Activated T-helper 1 cell treated with anti-CD3 and anti-CD28 coated beads, Interleukin-12 subunit alpha, Interleukin-12 subunit beta, Interleukin-2, Interleukin-4 antibody, amounts not matched to agents 30 ng/mL and 10 ng/mL and 1 ng/mL, durations not matched to agents 14 hours and 24 hours and 36 hours (primary cell): ENCODE measurements at regions of chr14 and their contacts with region 1.

Region 1: GRCh38 chr14:23301288-23301968 is 1.2 kb downstream of the PPP1R3E start:
- DNase-seq: peak; percentile 99
- H3K4me3 Mint-ChIP-seq: peak overlapping the region; percentile 91
- H3K27ac Mint-ChIP-seq: peak overlapping the region; percentile 97
- H3K4me1 Mint-ChIP-seq: peaks cover 29% of the 10 kb centered on the region
- H3K27me3 Mint-ChIP-seq: no peaks in the 10 kb centered on the region

Region 2: DNA sequence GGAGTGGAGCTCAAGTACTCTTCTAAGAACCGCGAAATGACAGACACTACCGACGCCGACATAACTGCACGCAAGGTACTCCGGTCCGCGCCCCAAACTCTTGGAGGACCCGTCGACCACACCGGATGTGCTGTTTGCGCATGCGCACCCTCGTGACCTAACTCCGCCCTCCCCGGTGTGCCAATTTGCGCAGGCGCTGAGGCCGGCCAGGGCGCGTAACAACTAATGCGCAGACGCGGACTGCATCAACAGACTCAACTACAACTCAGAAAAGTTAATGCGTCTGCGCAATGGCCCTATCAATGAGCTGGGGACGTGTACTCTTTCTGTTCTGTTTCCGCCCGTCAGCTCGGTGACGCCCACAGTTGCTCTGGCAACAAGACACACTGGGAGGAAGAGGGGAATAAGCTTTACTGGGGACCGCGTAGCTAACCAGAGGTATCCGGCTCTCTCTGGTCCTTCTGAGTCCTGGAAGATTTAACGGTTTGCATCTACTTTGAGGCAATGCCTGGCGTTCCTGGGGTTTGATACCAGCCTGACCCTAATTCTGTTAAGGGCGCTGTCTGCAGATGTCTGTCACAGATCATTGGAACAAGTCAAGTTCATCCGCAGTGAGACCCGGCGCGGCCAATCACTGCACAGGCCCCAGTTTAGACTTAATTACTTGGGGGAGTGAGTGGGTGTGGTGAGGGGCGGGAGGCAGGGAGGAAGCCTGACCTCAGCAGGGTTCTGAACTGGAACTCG is 712.2 kb before region 1 on chr14 and contains the start of gene DAD1:
- intact Hi-C with region 1: loop called (anchors 5 kb)
- DNase-seq: peak; percentile 100
- H3K4me3 Mint-ChIP-seq: peak within 1 kb of the TSS; percentile 91
- H3K27ac Mint-ChIP-seq: peak within 1 kb of the TSS; percentile 96
- H3K4me1 Mint-ChIP-seq: peaks cover 55% of the 10 kb centered on the region
- H3K27me3 Mint-ChIP-seq: no peaks in the 10 kb centered on the region
- total RNA-seq, gene DAD1: 228 and 229 TPM in 2 replicates

Region 3: DNA sequence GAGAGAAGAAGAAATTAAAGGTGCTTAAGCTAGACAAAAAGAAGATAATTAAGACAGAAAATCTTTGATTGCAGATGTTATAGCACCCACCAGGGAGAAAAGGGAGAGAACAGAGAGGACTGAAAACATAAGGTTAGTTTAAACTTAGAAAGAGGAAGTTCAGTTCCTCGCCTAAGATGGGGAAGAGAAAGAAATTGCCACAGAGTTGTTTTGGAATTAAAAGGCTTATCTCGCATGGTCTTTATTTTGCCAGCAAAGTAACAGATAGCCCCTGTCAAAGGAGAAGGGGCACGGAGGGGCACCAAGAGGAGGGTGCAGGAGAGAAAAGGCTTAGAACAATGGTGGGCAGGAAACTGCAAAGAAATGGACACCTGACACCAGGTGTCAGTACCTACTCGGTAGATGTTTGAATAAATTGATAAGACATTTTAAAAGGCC is 552.8 kb before region 1 on chr14:
- intact Hi-C with region 1: no loop called
- DNase-seq: no peak
- H3K4me3 Mint-ChIP-seq: no peak overlapping the region
- H3K27ac Mint-ChIP-seq: no peak overlapping the region
- H3K4me1 Mint-ChIP-seq: peaks cover 17% of the 10 kb centered on the region
- H3K27me3 Mint-ChIP-seq: peaks cover 3% of the 10 kb centered on the region

Region 4: DNA sequence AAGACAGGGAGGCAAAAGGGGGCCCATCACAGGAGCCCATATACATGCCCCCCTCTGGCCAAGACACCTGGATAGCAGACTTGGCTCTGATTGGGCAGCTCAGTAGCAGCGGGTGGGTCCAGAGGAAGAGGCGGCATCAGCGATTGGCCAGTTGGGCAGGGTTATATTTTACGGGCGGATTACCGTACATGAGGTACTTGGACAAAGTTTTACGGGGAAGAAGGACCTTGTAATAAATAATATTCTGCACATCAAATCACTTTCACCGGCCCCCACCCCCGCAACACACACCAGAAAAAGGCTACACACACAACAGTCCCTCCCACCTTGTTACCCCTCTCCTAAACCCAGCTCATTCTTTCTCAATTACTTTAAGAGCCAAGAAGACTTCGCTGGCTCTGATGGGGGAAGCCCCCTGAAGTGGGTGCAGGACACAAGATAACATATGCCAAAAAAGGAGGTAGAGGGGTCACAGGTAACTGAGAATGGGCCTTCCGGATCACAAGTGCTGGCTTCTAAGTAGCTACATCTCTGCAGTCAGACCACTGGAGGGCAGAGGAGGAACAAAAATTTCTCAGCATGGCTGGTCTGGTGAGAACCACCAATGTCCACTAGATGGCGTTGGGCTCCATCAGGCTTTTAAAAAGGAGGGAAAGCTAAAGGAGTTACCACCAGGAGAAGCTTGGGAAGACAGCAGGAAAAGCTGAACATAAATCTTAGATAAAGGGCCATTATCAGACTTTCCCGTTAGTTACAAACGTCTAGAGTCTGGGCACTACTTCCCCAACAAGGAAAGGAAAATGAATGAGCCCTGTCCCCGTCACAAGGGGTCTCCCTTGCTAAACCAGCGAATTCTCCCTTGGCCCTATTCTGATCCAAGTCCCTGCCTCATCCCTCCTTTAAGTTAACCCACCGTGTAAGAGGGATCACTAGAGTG is 232.7 kb before region 1 on chr14:
- intact Hi-C with region 1: loop called (anchors 1 kb)
- DNase-seq: peak; percentile 65
- H3K4me3 Mint-ChIP-seq: peak overlapping the region; percentile 74
- H3K27ac Mint-ChIP-seq: peak overlapping the region; percentile 53
- H3K4me1 Mint-ChIP-seq: peaks cover 42% of the 10 kb centered on the region
- H3K27me3 Mint-ChIP-seq: no peaks in the 10 kb centered on the region

Region 5: GRCh38 chr14:23269193-23269592 is 32.2 kb before region 1 on chr14:
- intact Hi-C with region 1: loop called (anchors 1 kb)
- DNase-seq: no peak
- H3K4me3 Mint-ChIP-seq: no peak overlapping the region
- H3K27ac Mint-ChIP-seq: no peak overlapping the region
- H3K4me1 Mint-ChIP-seq: no peaks in the 10 kb centered on the region
- H3K27me3 Mint-ChIP-seq: peaks cover 25% of the 10 kb centered on the region

Region 6: DNA sequence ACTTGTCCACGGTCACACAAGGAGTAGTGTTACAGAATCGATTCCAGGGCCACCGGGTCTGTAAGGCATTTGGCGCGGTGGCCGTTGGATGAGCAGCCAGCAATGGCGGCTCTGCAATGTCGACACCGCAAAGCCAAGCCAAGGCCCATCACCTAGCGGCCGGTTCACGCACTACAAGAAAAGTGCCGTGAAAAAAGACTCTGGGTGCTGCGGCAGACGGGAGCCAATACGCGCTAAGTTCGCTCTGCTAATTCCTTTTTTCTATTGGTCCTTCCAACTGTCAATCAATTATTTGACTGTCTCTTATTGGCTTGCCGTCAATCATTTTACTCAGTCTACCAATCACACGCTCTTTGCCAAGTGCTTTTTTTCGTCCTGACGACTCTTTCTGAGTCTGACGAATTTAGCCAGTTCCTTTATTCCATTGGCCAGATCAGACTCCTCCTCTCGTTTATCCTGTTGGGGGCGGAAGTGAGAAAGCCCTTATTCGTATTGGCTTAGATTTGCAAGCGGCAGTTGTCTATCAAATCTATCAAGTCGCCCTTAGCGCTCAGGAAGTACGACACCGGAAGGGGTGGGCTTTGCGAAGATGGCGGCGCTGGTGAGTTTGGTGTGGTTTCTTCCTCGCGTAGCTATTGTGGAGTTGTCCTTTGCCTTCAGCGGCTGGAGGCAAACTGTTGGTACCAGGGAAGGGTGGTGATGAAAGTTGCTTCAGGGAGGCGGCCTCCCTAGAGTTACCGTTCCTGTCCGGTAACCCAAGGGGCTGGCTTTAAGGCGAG is 167.9 kb after region 1 on chr14 and contains the start of gene NGDN:
- intact Hi-C with region 1: loop called (anchors 1 kb)
- DNase-seq: peak; percentile 89
- H3K4me3 Mint-ChIP-seq: no peak within 1 kb of the TSS
- H3K27ac Mint-ChIP-seq: peak within 1 kb of the TSS; percentile 45
- H3K4me1 Mint-ChIP-seq: peaks cover 11% of the 10 kb centered on the region
- H3K27me3 Mint-ChIP-seq: peaks cover 2% of the 10 kb centered on the region
- total RNA-seq, gene NGDN: 80.1 and 84.5 TPM in 2 replicates